Tibial artery (tissue), 4 donors: ENCODE measurements at regions of chrX and their contacts with region 1.

Region 1: GRCh38 chrX:64394874-64395567 is at the start of gene MTMR8:
- DNase-seq: peak; percentile 58 to 85
- H3K4me3 ChIP-seq: peak within 1 kb of the TSS; percentile 71 to 74
- H3K27ac ChIP-seq: peak within 1 kb of the TSS; percentile 60 to 79
- H3K4me1 ChIP-seq: peaks cover 0 to 13% (median 0%) of the 10 kb centered on the region in 4 donors
- H3K27me3 ChIP-seq: no peaks in the 10 kb centered on the region
- CTCF ChIP-seq: no peak

Region 2: GRCh38 chrX:64205735-64206491 is 189.1 kb before region 1 on chrX:
- intact Hi-C with region 1: loop called (anchors 10 kb)
- DNase-seq: peak; percentile 94 to 97
- H3K4me3 ChIP-seq: peak overlapping the region; percentile 81 to 83
- H3K27ac ChIP-seq: peak overlapping the region; percentile 89 to 95
- H3K4me1 ChIP-seq: peaks cover 0 to 35% (median 12%) of the 10 kb centered on the region in 4 donors
- H3K27me3 ChIP-seq: no peaks in the 10 kb centered on the region
- CTCF ChIP-seq: peak in 1 of 2 experiments; percentile 10